Vagina (tissue), 2 donors: ENCODE measurements at regions of chr7 and their contacts with region 1.

Region 1: DNA sequence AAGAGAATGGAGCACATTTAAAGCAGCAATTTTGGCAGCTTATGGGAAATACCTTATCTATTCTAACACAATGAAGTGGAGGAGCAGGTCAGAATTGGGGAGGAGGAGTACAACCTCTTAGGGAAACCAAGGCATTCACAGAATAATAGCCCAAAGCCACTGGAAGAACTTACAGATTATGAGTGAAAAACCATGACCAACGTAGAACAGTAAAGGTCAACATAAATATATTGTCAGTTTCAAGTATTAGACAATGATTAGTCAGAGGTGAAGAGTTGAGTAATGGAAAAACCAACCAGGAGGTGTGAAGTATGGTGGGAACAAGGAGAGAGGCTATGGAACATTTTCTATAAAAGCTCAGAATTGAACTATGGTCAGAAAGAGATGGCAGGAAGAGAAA is 304.3 kb upstream of the SP4 start:
- DNase-seq: no peak
- H3K4me3 ChIP-seq: no peak overlapping the region
- H3K27ac ChIP-seq: no peak overlapping the region
- H3K4me1 ChIP-seq: no peaks in the 10 kb centered on the region
- H3K27me3 ChIP-seq: no peaks in the 10 kb centered on the region
- CTCF ChIP-seq: no peak
- POLR2A ChIP-seq: no peak

Region 2: DNA sequence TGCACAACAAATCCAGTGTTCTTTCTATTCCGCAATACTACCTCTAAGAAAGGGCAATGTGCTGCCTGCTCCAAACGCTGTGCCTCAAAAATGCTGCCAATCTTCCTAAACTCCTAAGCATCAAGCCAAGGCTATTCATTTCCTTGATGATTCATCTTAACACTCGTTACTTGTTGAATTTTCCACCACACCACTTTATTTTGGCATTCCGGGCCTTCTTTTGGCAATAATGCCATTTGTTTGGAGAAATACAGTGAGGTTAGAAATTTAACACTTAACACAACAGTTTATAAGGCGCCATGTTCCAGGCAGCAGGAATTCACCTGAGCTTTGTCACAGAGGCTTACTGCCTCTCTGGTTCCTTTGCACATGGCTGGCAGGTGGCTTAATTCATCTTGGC is 590.7 kb before region 1 on chr7:
- intact Hi-C with region 1: no loop called
- DNase-seq: no peak
- H3K4me3 ChIP-seq: no peak overlapping the region
- H3K27ac ChIP-seq: no peak overlapping the region
- H3K4me1 ChIP-seq: no peaks in the 10 kb centered on the region
- H3K27me3 ChIP-seq: no peaks in the 10 kb centered on the region
- CTCF ChIP-seq: no peak
- POLR2A ChIP-seq: no peak

Region 3: GRCh38 chr7:20892776-20893175 is 230.8 kb before region 1 on chr7:
- intact Hi-C with region 1: loop called (anchors 5 kb)
- DNase-seq: no peak
- H3K4me3 ChIP-seq: no peak overlapping the region
- H3K27ac ChIP-seq: no peak overlapping the region
- H3K4me1 ChIP-seq: no peaks in the 10 kb centered on the region
- H3K27me3 ChIP-seq: no peaks in the 10 kb centered on the region
- CTCF ChIP-seq: no peak
- POLR2A ChIP-seq: no peak